ENCODE measurements at regions of chr13 and their contacts with region 1.

Region 1: GRCh38 chr13:96020155-96020575 is 33.0 kb downstream of the UGGT2 start:
- DNase-seq: peak; percentile 41
- CTCF ChIP-seq: peak; percentile 63

Region 2: GRCh38 chr13:96034662-96035061 is 14.5 kb after region 1 on chr13:
- CTCF ChIA-PET with region 1: interaction called, 16 read pairs
- POLR2A ChIA-PET with region 1: no interaction called
- DNase-seq: no peak
- CTCF ChIP-seq: no peak

Region 3: DNA sequence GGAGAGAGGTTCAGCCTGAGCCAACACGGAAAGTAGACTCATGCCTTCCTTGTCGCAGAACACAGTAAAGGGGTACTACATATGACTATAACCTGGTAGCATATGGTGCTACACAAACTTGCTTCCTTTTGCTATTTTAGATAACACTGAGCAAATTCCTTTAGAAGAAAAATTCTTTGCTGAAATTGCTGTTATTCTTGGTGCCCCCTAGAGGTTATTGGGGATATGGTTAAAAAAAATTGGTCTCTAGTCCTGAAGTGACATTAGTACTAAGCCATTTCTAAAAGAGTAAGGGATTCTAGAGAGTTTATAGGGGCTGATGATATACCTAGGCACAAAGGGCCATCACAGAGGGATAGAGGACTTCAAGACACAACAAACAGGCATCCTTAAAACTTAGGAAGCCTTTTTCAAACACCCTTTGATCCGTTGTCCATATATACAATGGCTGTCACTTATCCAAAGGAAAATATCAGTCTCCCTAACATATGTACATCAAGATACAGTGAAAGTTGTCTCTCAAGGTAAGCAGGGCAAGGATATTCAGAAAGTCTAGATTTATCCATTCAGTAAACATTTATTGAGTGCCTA is 55.9 kb after region 1 on chr13:
- CTCF ChIA-PET with region 1: interaction called, 33 read pairs
- POLR2A ChIA-PET with region 1: no interaction called
- DNase-seq: peak; percentile 31
- CTCF ChIP-seq: peak; percentile 32

Region 4: DNA sequence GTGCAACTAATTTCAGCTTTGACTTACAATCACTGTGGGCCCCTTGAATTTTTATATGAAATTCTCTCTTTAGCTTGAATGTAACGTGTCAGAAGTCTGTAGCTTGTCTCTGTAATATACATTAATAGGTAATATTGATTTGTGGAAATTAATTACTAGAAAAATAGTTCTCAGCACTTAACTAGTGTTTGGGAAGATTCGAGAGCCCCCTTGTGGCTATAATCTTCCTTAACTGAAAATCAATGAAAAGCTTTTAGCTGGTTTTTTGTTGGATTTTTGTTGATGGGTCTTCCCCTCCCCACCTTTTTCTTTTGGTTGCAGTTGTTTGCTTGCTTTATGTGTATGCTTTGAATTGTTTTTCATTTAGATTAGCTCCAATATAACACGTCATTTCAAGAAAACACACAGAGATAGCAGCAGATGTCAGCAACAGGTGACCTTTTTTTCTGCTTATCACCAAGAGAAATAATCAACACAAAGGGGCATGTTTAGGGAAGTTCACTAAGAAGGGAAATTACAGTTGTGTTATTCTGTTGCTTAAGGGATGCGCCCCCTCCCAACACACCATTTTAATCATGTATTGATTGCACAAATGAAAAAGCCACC is 797.3 kb after region 1 on chr13:
- CTCF ChIA-PET with region 1: interaction called, 53 read pairs
- POLR2A ChIA-PET with region 1: no interaction called
- DNase-seq: no peak
- CTCF ChIP-seq: peak; percentile 36